GM12878 (cell line): ENCODE measurements at regions of chr1 and their contacts with region 1.

Region 1: DNA sequence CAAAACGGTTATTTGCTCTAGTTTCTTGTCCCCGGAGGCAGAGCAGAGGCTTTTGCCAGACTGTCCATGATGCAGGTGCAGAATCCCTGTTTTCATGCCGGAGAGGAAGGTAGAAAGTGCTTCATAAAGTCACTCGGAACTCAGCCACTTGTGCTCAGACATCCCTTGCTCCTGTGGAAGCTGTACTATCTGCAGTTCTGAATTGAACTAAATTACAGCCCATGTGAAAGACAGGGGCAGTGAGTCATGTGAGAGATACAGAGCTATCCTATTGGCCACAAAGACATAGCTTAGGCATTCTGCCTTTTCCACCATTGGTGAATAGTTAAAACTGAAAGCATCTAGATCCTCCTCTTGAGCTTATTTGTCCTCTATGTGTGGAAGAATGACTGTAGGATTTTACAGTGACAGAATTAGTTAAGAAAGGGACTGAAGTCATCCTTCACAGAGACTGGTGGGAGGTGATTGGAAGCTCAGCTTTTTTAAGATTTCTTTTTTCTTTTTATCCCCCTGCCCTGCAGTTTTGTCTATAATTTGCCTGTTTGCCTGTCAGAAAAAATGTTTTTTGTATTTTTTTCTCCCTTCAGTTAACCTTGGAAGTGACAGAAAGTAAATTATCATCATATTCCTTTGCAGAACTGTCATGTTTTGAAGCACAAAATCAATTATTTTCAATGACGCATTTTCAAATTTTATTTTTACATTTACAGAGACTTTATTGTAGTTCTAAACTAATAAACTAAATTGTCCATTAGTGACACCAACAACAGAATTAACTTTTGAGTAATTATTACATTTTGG is 298.6 kb downstream of the PTPRC start:
- DNase-seq: peak; percentile 91
- ATAC-seq: peak; percentile 85
- H3K4me3 ChIP-seq: peak overlapping the region; percentile 62
- H3K27ac ChIP-seq: peak overlapping the region; percentile 29
- H3K4me1 ChIP-seq: no peaks in the 10 kb centered on the region; the same call in 1 of the 2 replicates
- H3K27me3 ChIP-seq: no peaks in the 10 kb centered on the region
- CTCF ChIP-seq: no peak
- EP300 ChIP-seq: no peak
- POLR2A ChIP-seq: peak; percentile 87
- RAD21 ChIP-seq: no peak

Region 2: DNA sequence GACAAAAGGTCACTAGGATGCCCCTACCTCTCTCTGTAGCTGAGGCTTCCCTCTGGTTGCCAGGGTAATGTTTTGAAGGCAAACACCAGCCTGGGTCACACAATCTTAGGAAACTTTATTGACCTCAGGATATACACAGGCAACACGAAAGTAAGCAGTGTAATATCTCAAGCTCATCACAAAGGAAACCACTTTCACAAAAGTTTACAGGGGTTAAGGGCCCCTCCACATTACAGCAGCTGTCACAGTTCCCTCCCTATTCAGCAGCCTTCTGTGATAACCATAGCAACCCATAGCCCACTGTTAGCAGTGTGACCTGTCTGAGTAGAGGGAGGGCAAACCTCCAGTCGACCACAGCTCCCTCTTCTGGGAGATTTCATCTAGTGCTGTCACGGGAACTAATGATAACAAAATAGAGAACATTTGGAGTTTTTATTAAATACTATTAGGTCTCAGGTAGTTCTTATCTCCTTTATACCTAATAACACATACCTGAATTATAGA is 148.8 kb before region 1 on chr1:
- CTCF ChIA-PET with region 1: no interaction called
- POLR2A ChIA-PET with region 1: no interaction called
- RAD21 ChIA-PET with region 1: interaction called, 5 read pairs
- SMC1A ChIA-PET with region 1: interaction called, 4 read pairs
- in situ Hi-C with region 1: no loop called
- intact Hi-C with region 1: loop called (anchors 5 kb)
- DNase-seq: no peak
- ATAC-seq: peak; percentile 99
- H3K4me3 ChIP-seq: no peak overlapping the region
- H3K27ac ChIP-seq: no peak overlapping the region
- H3K4me1 ChIP-seq: no peaks in the 10 kb centered on the region
- H3K27me3 ChIP-seq: no peaks in the 10 kb centered on the region
- CTCF ChIP-seq: peak; percentile 30 to 37 (median 32); a peak in 3 of 6 replicates
- EP300 ChIP-seq: peak in 1 of 2 experiments; percentile 11; a peak in 1 of 4 replicates
- POLR2A ChIP-seq: no peak
- RAD21 ChIP-seq: peak; percentile 48; the same call in 1 of the 2 replicates

Region 3: GRCh38 chr1:198922638-198923430 is 14.6 kb before region 1 on chr1:
- CTCF ChIA-PET with region 1: interaction called, 8 read pairs
- POLR2A ChIA-PET with region 1: interaction called, 37 read pairs
- RAD21 ChIA-PET with region 1: interaction called, 85 read pairs
- SMC1A ChIA-PET with region 1: interaction called, 49 read pairs
- in situ Hi-C with region 1: no loop called
- intact Hi-C with region 1: no loop called
- DNase-seq: peak; percentile 71
- ATAC-seq: peak; percentile 82
- H3K4me3 ChIP-seq: no peak overlapping the region
- H3K27ac ChIP-seq: peak overlapping the region; percentile 42
- H3K4me1 ChIP-seq: peaks cover 20% of the 10 kb centered on the region
- H3K27me3 ChIP-seq: no peaks in the 10 kb centered on the region
- CTCF ChIP-seq: no peak
- EP300 ChIP-seq: peak; percentile 66 to 77; a peak in 3 of 4 replicates
- POLR2A ChIP-seq: no peak
- RAD21 ChIP-seq: peak; percentile 13; the same call in 1 of the 2 replicates

Region 4: GRCh38 chr1:199041173-199041914 is 103.9 kb after region 1 on chr1:
- CTCF ChIA-PET with region 1: interaction called, 4 read pairs
- POLR2A ChIA-PET with region 1: interaction called, 7 read pairs
- RAD21 ChIA-PET with region 1: interaction called, 15 read pairs
- SMC1A ChIA-PET with region 1: interaction called, 10 read pairs
- in situ Hi-C with region 1: no loop called
- intact Hi-C with region 1: loop called (anchors 1 kb)
- DNase-seq: peak; percentile 94
- ATAC-seq: peak; percentile 96
- H3K4me3 ChIP-seq: no peak overlapping the region
- H3K27ac ChIP-seq: no peak overlapping the region
- H3K4me1 ChIP-seq: peaks cover 5% of the 10 kb centered on the region; the same call in 1 of the 2 replicates
- H3K27me3 ChIP-seq: no peaks in the 10 kb centered on the region
- CTCF ChIP-seq: no peak
- EP300 ChIP-seq: peak; percentile 85 to 93
- POLR2A ChIP-seq: no peak
- RAD21 ChIP-seq: no peak

Region 5: DNA sequence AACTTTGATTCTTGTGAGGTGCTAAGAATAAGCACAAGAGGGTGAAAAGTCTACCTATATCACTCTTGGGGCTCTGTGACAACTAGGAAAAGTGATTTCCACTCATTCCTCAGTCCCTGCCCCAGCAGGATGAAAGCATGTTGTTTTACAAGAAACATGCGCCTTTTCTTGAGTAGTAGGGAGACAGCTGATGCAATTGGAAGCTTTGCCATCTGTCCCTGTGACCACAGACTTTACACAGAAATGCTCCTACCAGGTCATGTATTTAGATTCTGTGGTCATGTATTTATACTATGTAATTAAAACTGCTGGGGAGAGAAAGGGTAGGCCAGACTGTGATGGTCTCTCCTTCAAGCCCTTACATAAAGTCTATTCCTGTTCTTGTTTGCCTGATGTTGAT is 146.9 kb after region 1 on chr1:
- CTCF ChIA-PET with region 1: interaction called, 3 read pairs
- POLR2A ChIA-PET with region 1: interaction called, 4 read pairs
- RAD21 ChIA-PET with region 1: interaction called, 26 read pairs
- SMC1A ChIA-PET with region 1: interaction called, 22 read pairs
- in situ Hi-C with region 1: no loop called
- intact Hi-C with region 1: loop called (anchors 2 kb)
- DNase-seq: no peak
- ATAC-seq: no peak
- H3K4me3 ChIP-seq: no peak overlapping the region
- H3K27ac ChIP-seq: no peak overlapping the region
- H3K4me1 ChIP-seq: peaks cover 13% of the 10 kb centered on the region
- H3K27me3 ChIP-seq: no peaks in the 10 kb centered on the region
- CTCF ChIP-seq: no peak
- EP300 ChIP-seq: no peak
- POLR2A ChIP-seq: no peak
- RAD21 ChIP-seq: no peak

Region 6: GRCh38 chr1:199151634-199152425 is 214.4 kb after region 1 on chr1:
- CTCF ChIA-PET with region 1: no interaction called
- POLR2A ChIA-PET with region 1: interaction called, 4 read pairs
- RAD21 ChIA-PET with region 1: interaction called, 22 read pairs
- SMC1A ChIA-PET with region 1: interaction called, 5 read pairs
- in situ Hi-C with region 1: no loop called
- intact Hi-C with region 1: loop called (anchors 10 kb)
- DNase-seq: no peak
- ATAC-seq: peak; percentile 85
- H3K4me3 ChIP-seq: no peak overlapping the region; the same call in 1 of the 2 replicates
- H3K27ac ChIP-seq: peak overlapping the region; percentile 13; the same call in 1 of the 2 replicates
- H3K4me1 ChIP-seq: peaks cover 12% of the 10 kb centered on the region; the same call in 1 of the 2 replicates
- H3K27me3 ChIP-seq: no peaks in the 10 kb centered on the region
- CTCF ChIP-seq: no peak
- EP300 ChIP-seq: peak; percentile 78 to 82; a peak in 3 of 4 replicates
- POLR2A ChIP-seq: no peak
- RAD21 ChIP-seq: no peak